Sigmoid colon (tissue), 7 donors: ENCODE measurements at regions of chr7 and their contacts with region 1.

Region 1: DNA sequence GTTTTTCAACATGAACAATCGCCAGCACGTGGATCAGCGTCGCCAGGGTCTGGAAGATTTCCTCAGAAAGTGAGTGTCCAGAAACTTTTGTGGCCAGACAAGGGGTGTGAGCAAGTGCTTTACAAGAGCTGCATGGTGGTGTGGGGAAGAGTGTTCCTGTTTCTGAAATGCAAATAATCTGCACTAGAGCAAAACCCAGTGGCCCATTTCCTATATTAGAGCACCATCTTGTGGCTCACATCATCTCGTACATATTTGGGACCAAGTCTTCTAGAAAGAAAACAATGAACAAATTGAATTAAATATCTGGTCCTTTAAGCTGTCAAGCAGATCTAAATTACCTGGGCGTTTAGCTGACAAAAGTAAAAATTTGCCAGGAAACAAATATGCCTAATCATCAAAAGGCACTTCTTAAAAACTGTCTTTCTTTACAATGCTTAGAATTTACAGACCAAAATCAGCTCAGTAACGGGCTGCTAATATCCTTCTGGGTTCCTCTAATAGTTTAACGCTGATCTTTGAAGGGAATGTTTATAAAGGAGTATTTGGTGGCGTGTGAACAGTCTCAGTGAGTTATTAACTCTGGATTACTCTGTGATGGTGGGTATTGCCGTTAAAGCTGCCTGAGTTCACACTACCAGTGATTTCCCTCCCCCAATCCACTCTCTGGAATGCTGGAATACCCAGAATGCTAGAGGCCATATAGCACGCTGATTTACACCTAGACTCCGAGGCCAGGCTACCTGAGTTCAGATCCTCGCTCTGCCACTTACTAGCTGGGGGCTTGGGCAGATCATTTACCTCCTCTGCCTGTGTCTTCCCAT is 73.6 kb downstream of the SNX10 start:
- DNase-seq: no peak
- H3K4me3 ChIP-seq: no peak overlapping the region
- H3K27ac ChIP-seq: no peak overlapping the region
- H3K4me1 ChIP-seq: peaks cover 0 to 8% (median 0%) of the 10 kb centered on the region in 4 donors
- H3K27me3 ChIP-seq: peaks cover 5 to 47% (median 14%) of the 10 kb centered on the region in 3 donors
- CTCF ChIP-seq: peak; percentile 62 to 79 (median 69)
- EP300 ChIP-seq: no peak
- POLR2A ChIP-seq: no peak

Region 2: DNA sequence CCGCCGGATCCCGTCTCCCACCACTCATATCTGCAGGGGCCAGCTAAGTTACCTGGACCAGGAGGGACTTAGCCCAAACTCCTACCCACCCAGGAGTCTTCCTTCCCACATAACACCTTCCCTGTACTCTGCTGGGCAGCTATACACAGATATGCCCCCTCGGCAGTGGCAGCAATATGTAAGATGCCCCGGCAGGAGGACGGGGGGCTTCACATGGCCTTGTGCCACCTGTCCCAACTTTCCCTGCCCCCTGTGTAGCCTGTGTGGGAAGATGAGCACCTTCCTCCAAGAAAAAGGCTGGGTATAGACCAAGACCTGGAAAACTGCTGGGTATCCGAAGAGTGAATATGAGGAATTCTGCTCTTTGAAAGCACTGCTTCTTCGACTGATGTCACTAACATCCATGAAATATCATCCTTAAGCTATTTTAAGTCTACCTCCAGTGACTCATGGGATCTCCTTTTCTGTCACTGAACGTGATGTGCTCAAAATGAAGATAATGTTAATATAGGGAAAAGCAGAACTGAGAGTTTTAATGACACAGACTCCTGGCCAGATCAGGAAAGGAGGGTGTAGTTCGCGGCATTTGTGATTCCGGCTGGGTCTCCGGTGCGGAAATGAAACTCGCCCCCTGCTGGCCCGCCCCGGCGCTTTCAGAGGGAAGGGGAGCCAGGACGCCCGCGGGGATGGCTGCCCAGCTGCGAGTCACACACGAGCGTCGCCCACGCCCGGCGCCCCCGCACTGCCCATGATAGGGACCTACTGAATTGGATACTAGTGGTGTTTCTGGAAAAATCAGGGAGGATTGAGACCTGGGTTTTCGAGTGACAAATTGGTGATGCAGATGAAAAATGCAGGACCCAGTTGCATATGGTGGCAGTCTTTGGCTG is 470.1 kb before region 1 on chr7:
- intact Hi-C with region 1: loop called (anchors 1 kb)
- DNase-seq: peak; percentile 79
- H3K4me3 ChIP-seq: peak overlapping the region in 3 of 4 donors; percentile 3 to 21 (median 18)
- H3K27ac ChIP-seq: no peak overlapping the region
- H3K4me1 ChIP-seq: peaks cover 0 to 20% (median 9%) of the 10 kb centered on the region in 4 donors
- H3K27me3 ChIP-seq: peaks cover 0 to 28% (median 6%) of the 10 kb centered on the region in 3 donors
- CTCF ChIP-seq: peak in 3 of 4 experiments; percentile 53 to 63 (median 54)
- EP300 ChIP-seq: no peak
- POLR2A ChIP-seq: no peak

Region 3: GRCh38 chr7:25968205-25968993 is 396.9 kb before region 1 on chr7:
- intact Hi-C with region 1: no loop called
- DNase-seq: no peak
- H3K4me3 ChIP-seq: no peak overlapping the region
- H3K27ac ChIP-seq: no peak overlapping the region
- H3K4me1 ChIP-seq: no peaks in the 10 kb centered on the region
- H3K27me3 ChIP-seq: peaks cover 0 to 20% (median 0%) of the 10 kb centered on the region in 3 donors
- CTCF ChIP-seq: no peak
- EP300 ChIP-seq: no peak
- POLR2A ChIP-seq: no peak

Region 4: DNA sequence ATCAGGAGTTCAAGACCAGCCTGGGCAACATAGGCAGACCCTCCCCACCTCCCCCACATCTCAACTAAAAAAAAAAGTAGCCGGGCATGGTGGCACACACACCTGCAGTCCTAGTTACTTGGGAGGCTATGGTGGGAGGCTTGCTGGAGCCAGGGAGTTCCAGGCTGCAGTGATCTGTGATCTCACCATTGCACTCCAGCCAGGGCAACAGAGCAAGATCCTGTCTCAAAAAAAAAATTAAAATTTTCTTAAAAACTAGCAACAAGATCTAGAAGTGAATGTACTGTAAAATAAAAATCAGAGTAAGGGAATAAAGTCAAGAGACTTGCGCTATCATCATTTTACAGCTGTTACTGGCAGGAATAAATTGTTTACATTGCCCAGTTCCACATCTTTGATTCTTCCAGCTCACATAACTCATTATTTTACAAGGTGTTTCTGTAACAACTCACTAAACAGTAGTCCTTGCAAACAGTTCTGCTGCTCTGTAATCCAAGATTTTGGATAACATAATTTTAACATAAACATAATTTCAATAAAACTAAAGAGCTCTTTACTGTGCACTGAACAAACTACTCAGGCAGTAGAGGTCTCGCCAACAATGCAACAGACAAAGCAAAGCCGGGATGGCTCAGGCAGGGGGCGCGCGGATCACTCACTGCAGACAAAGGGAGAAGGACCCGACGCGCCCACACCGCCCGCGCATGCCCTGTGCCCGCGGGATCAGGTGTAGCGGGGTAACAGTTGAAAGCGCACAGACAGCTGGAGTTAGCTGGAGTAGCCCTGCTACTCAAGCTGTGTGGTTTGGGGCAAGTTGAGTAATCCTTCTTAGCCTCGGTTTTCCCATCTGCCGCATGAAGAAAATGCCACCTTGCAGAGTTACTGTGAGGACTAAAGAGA is 286.6 kb before region 1 on chr7:
- intact Hi-C with region 1: loop called (anchors 5 kb)
- DNase-seq: peak; percentile 76
- H3K4me3 ChIP-seq: peak overlapping the region in 1 of 4 donors; percentile 0
- H3K27ac ChIP-seq: no peak overlapping the region
- H3K4me1 ChIP-seq: peaks cover 0 to 17% (median 13%) of the 10 kb centered on the region in 4 donors
- H3K27me3 ChIP-seq: peaks cover 0 to 71% (median 23%) of the 10 kb centered on the region in 3 donors
- CTCF ChIP-seq: peak in 1 of 4 experiments; percentile 13
- EP300 ChIP-seq: peak in 1 of 4 donors; percentile 11
- POLR2A ChIP-seq: no peak

Region 5: GRCh38 chr7:26090927-26091519 is 274.3 kb before region 1 on chr7:
- intact Hi-C with region 1: loop called (anchors 2 kb)
- DNase-seq: no peak
- H3K4me3 ChIP-seq: no peak overlapping the region
- H3K27ac ChIP-seq: no peak overlapping the region
- H3K4me1 ChIP-seq: peaks cover 0 to 8% (median 0%) of the 10 kb centered on the region in 4 donors
- H3K27me3 ChIP-seq: peaks cover 0 to 13% (median 0%) of the 10 kb centered on the region in 3 donors
- CTCF ChIP-seq: peak in 3 of 4 experiments; percentile 37 to 58 (median 41)
- EP300 ChIP-seq: no peak
- POLR2A ChIP-seq: no peak

Region 6: GRCh38 chr7:26216049-26216448 is 149.2 kb before region 1 on chr7:
- intact Hi-C with region 1: no loop called
- DNase-seq: no peak
- H3K4me3 ChIP-seq: no peak overlapping the region
- H3K27ac ChIP-seq: no peak overlapping the region
- H3K4me1 ChIP-seq: no peaks in the 10 kb centered on the region
- H3K27me3 ChIP-seq: peaks cover 0 to 3% (median 0%) of the 10 kb centered on the region in 3 donors
- CTCF ChIP-seq: no peak
- EP300 ChIP-seq: no peak
- POLR2A ChIP-seq: no peak

Region 7: GRCh38 chr7:26413012-26413691 is 47.9 kb after region 1 on chr7:
- intact Hi-C with region 1: no loop called
- DNase-seq: no peak
- H3K4me3 ChIP-seq: no peak overlapping the region
- H3K27ac ChIP-seq: no peak overlapping the region
- H3K4me1 ChIP-seq: no peaks in the 10 kb centered on the region
- H3K27me3 ChIP-seq: no peaks in the 10 kb centered on the region
- CTCF ChIP-seq: no peak
- EP300 ChIP-seq: no peak
- POLR2A ChIP-seq: no peak

Region 8: DNA sequence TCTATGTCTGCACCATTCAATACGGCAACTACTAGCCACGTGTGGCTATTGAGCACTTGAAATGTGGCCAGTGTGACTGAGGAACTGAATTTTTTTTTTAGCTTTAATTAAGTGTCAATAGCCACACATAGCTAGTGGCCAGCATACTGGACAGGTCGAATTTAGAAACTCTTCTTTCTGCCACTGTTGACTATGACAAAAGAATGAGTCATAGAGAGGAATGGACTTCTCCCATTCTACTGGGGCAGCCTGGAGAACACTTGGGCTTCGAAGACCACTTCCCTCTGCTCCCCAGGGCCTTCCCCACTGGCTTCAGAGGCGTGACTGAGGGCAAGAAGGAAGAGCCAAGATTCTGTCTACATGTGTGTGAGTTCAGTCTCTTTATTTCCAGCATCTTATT is 63.9 kb after region 1 on chr7:
- intact Hi-C with region 1: no loop called
- DNase-seq: no peak
- H3K4me3 ChIP-seq: no peak overlapping the region
- H3K27ac ChIP-seq: no peak overlapping the region
- H3K4me1 ChIP-seq: no peaks in the 10 kb centered on the region
- H3K27me3 ChIP-seq: no peaks in the 10 kb centered on the region
- CTCF ChIP-seq: no peak
- EP300 ChIP-seq: no peak
- POLR2A ChIP-seq: no peak

Region 9: GRCh38 chr7:26667500-26668133 is 302.3 kb after region 1 on chr7:
- intact Hi-C with region 1: loop called (anchors 1 kb)
- DNase-seq: peak; percentile 69
- H3K4me3 ChIP-seq: no peak overlapping the region
- H3K27ac ChIP-seq: no peak overlapping the region
- H3K4me1 ChIP-seq: peaks cover 0 to 5% (median 0%) of the 10 kb centered on the region in 4 donors
- H3K27me3 ChIP-seq: no peaks in the 10 kb centered on the region
- CTCF ChIP-seq: peak; percentile 42 to 71 (median 66)
- EP300 ChIP-seq: no peak
- POLR2A ChIP-seq: no peak

Region 10: DNA sequence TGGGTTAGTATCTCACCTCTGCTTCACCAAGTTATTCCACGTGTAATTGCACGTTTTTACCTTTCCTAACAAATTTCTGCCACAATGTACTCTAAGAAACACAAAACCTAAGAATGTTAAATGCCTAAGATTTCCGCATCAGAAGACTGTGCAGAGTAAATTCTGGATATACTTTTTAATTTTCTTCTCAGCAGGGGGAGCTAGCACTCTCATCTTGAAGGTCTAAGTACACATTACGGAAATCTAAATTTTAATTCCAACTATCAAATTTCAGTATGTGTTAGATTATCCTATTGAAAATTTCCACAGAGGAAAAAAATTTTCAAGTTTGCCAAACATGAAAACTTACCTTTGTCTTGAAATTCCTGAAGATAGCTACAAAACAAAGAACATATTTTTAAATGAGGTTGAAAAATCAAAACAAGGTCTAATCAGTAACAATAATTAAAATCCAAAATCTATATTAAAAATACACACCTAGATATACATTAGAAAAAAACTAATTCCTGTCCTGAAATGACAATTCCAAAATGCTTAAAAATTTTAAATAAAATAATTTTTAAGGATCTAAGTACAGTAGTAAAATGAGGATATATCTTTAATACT is 488.6 kb after region 1 on chr7:
- intact Hi-C with region 1: loop called (anchors 5 kb)
- DNase-seq: no peak
- H3K4me3 ChIP-seq: no peak overlapping the region
- H3K27ac ChIP-seq: no peak overlapping the region
- H3K4me1 ChIP-seq: no peaks in the 10 kb centered on the region
- H3K27me3 ChIP-seq: no peaks in the 10 kb centered on the region
- CTCF ChIP-seq: peak in 3 of 4 experiments; percentile 52 to 61 (median 57)
- EP300 ChIP-seq: no peak
- POLR2A ChIP-seq: no peak

Region 11: GRCh38 chr7:27160546-27161213 is 795.4 kb after region 1 on chr7:
- intact Hi-C with region 1: loop called (anchors 1 kb)
- DNase-seq: peak; percentile 94
- H3K4me3 ChIP-seq: peak overlapping the region; percentile 38 to 85 (median 82)
- H3K27ac ChIP-seq: peak overlapping the region in 3 of 4 donors; percentile 97 to 98 (median 98)
- H3K4me1 ChIP-seq: peaks cover 0 to 44% (median 40%) of the 10 kb centered on the region in 4 donors
- H3K27me3 ChIP-seq: no peaks in the 10 kb centered on the region
- CTCF ChIP-seq: peak; percentile 98 to 100 (median 99)
- EP300 ChIP-seq: no peak
- POLR2A ChIP-seq: no peak